ENCODE measurements at regions of chr7 and their contacts with region 1.

Region 1: GRCh38 chr7:80018941-80019752 is 115.5 kb upstream of the GNAI1 start:
- DNase-seq: peak in 8 of 9 experiments; percentile 21 to 68 (median 41)
- ATAC-seq: peak; percentile 71
- H3K4me3 ChIP-seq: no peak overlapping the region
- H3K4me3 Mint-ChIP-seq: no peak overlapping the region
- H3K27ac ChIP-seq: no peak overlapping the region
- H3K27ac Mint-ChIP-seq: no peak overlapping the region
- H3K4me1 ChIP-seq: peaks cover 5% of the 10 kb centered on the region
- H3K4me1 Mint-ChIP-seq: no peaks in the 10 kb centered on the region
- H3K27me3 ChIP-seq: no peaks in the 10 kb centered on the region
- H3K27me3 Mint-ChIP-seq: peaks cover 2% of the 10 kb centered on the region
- CTCF ChIP-seq: peak; percentile 67

Region 2: DNA sequence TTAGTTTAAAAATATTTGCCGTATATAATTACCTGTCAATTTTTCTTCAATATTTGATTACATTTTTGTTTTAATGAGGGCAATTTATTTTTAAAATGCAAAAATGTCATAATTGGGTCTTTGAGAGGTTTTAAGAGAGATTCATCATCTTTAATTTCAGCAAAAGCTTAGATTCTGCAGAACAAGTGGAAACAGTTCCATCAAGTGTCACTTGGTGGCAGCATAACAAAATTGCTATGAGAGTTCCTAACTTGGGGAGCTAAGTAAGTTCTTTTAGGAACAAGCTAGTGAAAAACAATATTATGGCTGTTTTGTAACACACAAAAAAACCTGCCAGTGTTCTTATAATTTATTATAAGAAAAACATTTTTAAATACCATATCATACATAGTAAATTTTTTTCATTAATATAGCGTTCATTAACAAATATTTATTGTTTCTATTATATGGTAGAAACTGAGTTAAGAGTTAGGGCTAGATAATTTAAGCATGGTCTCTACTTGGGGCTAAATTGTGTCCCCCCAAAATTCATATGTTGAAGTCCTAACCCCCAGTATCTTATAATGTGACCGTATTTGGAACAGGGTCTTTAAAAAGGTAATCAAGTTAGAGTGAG is 720.9 kb before region 1 on chr7:
- CTCF ChIA-PET with region 1: interaction called, 3 read pairs
- POLR2A ChIA-PET with region 1: no interaction called
- intact Hi-C with region 1: loop called (anchors 2 to 5 kb)
- DNase-seq: peak in 2 of 9 experiments; percentile 3 to 14
- ATAC-seq: no peak
- H3K4me3 ChIP-seq: no peak overlapping the region
- H3K4me3 Mint-ChIP-seq: no peak overlapping the region
- H3K27ac ChIP-seq: no peak overlapping the region
- H3K27ac Mint-ChIP-seq: no peak overlapping the region
- H3K4me1 ChIP-seq: no peaks in the 10 kb centered on the region
- H3K4me1 Mint-ChIP-seq: no peaks in the 10 kb centered on the region
- H3K27me3 ChIP-seq: no peaks in the 10 kb centered on the region
- H3K27me3 Mint-ChIP-seq: no peaks in the 10 kb centered on the region
- CTCF ChIP-seq: peak; percentile 53

Region 3: DNA sequence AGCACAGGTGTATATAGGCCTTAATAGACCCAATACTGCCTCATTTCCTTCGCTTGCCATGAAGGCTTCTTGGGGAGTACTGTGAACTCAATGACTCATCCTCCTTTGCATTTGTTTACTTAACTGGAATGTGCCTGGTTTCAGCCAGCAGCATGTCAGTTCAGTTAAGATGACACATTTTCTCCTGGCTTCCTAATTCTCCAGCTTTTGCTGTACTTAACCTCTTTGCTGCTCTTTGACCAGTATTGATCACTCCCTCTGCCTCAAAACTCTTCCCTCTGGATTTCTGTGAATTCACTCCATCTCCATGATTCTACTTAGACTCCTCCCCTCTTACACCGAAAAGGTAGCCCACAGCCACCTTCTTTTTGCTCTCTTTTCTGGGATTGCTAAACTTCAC is 701.4 kb before region 1 on chr7:
- CTCF ChIA-PET with region 1: no interaction called
- POLR2A ChIA-PET with region 1: no interaction called
- intact Hi-C with region 1: no loop called
- DNase-seq: no peak
- ATAC-seq: no peak
- H3K4me3 ChIP-seq: no peak overlapping the region
- H3K4me3 Mint-ChIP-seq: no peak overlapping the region
- H3K27ac ChIP-seq: no peak overlapping the region
- H3K27ac Mint-ChIP-seq: no peak overlapping the region
- H3K4me1 ChIP-seq: no peaks in the 10 kb centered on the region
- H3K4me1 Mint-ChIP-seq: no peaks in the 10 kb centered on the region
- H3K27me3 ChIP-seq: no peaks in the 10 kb centered on the region
- H3K27me3 Mint-ChIP-seq: peaks cover 2% of the 10 kb centered on the region
- CTCF ChIP-seq: no peak

Region 4: DNA sequence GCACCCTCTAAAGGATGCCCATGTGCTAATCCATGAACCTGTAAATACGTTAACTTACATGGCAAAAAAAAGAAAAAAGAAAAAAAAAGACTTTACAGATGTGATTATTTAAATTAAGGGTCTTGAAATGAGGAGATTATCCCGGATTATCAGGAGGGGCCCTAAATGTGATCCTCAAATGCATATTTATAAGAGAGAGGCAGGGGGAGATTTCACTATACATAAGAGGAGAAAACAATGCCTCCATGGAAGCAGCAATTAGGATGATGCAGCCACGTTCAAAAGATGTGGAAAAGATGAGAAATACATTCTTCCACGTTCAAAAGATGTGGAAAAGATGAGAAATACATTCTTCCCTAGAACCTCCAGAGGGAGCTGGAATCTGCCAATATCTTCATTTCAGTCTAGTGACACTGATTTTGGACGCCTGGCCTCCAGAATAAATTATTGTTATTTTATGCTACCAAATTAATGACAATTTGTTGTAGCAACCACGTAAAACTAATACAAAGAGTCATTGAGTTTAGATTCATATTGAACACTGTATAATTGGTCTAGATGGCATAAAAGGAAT is 212.9 kb before region 1 on chr7:
- CTCF ChIA-PET with region 1: no interaction called
- POLR2A ChIA-PET with region 1: no interaction called
- intact Hi-C with region 1: loop called (anchors 5 kb)
- DNase-seq: peak in 1 of 9 experiments; percentile 1
- ATAC-seq: no peak
- H3K4me3 ChIP-seq: no peak overlapping the region
- H3K4me3 Mint-ChIP-seq: no peak overlapping the region
- H3K27ac ChIP-seq: no peak overlapping the region
- H3K27ac Mint-ChIP-seq: no peak overlapping the region
- H3K4me1 ChIP-seq: no peaks in the 10 kb centered on the region
- H3K4me1 Mint-ChIP-seq: no peaks in the 10 kb centered on the region
- H3K27me3 ChIP-seq: no peaks in the 10 kb centered on the region
- H3K27me3 Mint-ChIP-seq: no peaks in the 10 kb centered on the region
- CTCF ChIP-seq: no peak

Region 5: DNA sequence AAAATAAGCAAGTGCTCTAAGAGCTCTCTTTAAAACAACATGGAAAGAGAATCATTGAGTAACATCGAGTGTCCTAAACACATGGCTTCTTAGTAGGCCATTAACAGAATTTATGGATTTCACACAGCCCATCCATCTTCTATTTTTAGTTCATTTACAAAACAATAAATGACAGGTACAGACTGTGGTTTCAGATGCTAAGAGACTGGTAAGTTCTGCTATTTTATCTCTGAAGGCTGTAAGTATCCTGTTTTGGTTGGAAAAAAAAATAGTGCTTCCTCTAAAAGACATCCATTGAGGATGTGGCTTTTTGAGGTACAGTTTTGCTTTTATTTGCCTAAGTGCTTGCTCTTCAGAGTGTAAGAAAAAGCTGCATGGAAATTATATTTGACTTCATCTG is 88.1 kb after region 1 on chr7:
- CTCF ChIA-PET with region 1: no interaction called
- POLR2A ChIA-PET with region 1: no interaction called
- intact Hi-C with region 1: no loop called
- DNase-seq: peak in 1 of 9 experiments; percentile 16
- ATAC-seq: peak; percentile 36
- H3K4me3 ChIP-seq: no peak overlapping the region
- H3K4me3 Mint-ChIP-seq: no peak overlapping the region
- H3K27ac ChIP-seq: no peak overlapping the region
- H3K27ac Mint-ChIP-seq: peak overlapping the region; percentile 70
- H3K4me1 ChIP-seq: peaks cover 10% of the 10 kb centered on the region
- H3K4me1 Mint-ChIP-seq: peaks cover 26% of the 10 kb centered on the region
- H3K27me3 ChIP-seq: no peaks in the 10 kb centered on the region
- H3K27me3 Mint-ChIP-seq: no peaks in the 10 kb centered on the region
- CTCF ChIP-seq: no peak

Measured in CD8-positive, alpha-beta T cell (primary cell).